ENCODE measurements at regions of chr9 and their contacts with region 1.

Region 1: DNA sequence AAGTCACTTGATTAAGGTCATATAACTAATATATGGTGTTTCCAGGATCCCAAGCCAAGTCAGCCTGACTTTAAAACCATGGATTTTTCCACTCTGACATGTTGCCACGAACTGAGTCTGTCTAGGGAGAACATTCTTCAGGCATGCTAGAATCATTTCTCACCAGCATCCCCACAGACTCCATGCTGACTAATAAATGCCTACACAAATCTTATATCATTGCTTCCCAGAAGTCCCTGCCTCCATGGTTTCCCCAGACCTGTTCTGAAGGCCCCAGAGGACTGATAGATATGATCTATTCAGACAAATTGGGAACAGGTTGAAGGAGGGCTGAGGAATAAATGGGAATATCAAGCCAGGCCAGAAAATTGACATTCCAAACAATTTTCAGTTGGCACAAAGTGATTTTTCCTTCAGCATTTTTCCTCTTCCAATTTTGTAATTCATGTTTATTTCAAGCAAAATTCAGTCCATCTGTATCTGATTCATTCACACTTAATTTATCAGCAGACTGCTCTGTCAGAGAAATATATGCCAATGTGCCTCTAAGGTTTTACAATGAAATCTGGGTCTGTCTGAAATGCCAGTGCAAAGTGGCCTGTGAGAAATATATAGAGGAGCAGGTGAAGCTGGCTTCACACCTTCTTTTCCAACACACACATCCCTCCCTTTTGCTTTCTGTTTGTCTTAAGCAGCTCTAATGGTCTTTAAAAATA is 413.6 kb upstream of the TNC start:
- DNase-seq: no peak
- H3K4me3 ChIP-seq: no peak overlapping the region
- H3K27ac ChIP-seq: no peak overlapping the region
- H3K4me1 ChIP-seq: no peaks in the 10 kb centered on the region
- H3K27me3 ChIP-seq: no peaks in the 10 kb centered on the region
- CTCF ChIP-seq: no peak

Region 2: GRCh38 chr9:114856215-114856941 is 675.2 kb before region 1 on chr9:
- CTCF ChIA-PET with region 1: no interaction called
- POLR2A ChIA-PET with region 1: interaction called, 12 read pairs
- intact Hi-C with region 1: no loop called
- DNase-seq: no peak
- H3K4me3 ChIP-seq: no peak overlapping the region
- H3K27ac ChIP-seq: no peak overlapping the region
- H3K4me1 ChIP-seq: no peaks in the 10 kb centered on the region
- H3K27me3 ChIP-seq: no peaks in the 10 kb centered on the region
- CTCF ChIP-seq: no peak

Region 3: GRCh38 chr9:115495052-115495635 is 36.4 kb before region 1 on chr9:
- CTCF ChIA-PET with region 1: no interaction called
- POLR2A ChIA-PET with region 1: no interaction called
- intact Hi-C with region 1: no loop called
- DNase-seq: no peak
- H3K4me3 ChIP-seq: no peak overlapping the region
- H3K27ac ChIP-seq: no peak overlapping the region
- H3K4me1 ChIP-seq: peaks cover 16% of the 10 kb centered on the region
- H3K27me3 ChIP-seq: no peaks in the 10 kb centered on the region
- CTCF ChIP-seq: no peak

Region 4: GRCh38 chr9:116000748-116001329 is 469.3 kb after region 1 on chr9:
- CTCF ChIA-PET with region 1: no interaction called
- POLR2A ChIA-PET with region 1: no interaction called
- intact Hi-C with region 1: no loop called
- DNase-seq: peak; percentile 35
- H3K4me3 ChIP-seq: no peak overlapping the region
- H3K27ac ChIP-seq: no peak overlapping the region
- H3K4me1 ChIP-seq: peaks cover 8% of the 10 kb centered on the region
- H3K27me3 ChIP-seq: no peaks in the 10 kb centered on the region
- CTCF ChIP-seq: peak; percentile 66